Lower leg skin (tissue), 4 donors: ENCODE measurements at regions of chr11 and their contacts with region 1.

Region 1: GRCh38 chr11:110195845-110196754 is 100.3 kb downstream of the RDX start:
- DNase-seq: peak in 1 of 2 donors; percentile 48
- H3K4me3 ChIP-seq: no peak overlapping the region
- CTCF ChIP-seq: no peak
- POLR2A ChIP-seq: no peak

Region 2: DNA sequence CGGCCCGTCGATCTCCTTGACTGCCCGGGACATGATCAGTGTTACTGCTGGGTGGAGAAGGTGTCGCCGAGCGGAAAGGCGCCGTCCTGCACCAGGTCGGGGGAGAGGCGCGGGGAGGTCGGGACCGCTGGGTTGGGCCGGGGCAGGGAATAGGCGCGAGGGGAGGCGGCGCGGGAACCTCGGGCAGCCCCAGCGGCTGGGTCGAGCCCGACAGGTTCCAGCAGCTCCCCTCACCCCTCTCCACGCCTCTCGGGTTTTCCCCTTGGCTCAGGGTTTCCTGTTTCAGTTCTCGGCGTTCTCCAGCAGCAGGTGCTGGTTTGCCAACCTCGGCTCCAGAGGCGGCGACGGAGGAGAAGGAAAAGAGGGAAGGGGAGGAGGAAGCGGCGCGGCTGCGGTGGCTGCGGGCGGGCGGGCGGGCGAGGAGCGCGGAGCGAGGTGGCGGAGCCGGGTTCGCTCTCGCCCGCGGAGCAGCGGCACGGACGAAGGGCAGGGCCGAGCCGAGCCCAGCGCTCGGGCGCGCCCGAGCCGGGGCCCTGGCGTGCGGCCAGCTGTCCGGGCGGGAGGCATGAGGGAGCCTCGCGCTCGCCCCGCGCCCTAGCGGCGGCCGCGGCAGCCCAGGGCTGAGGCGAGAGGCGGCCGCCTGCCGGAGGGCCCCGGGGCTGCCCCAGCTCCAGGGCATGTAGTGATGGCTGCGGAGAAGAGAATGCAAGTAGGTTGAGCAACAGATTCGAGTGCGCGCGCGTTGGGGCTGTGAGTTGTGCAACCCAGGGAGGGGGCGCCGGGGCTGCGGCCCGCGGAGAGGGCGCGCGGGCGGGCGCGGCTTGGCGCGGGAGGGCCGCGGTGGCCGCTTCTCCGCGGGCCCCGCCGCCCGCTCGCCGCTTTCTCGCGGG is 103.3 kb before region 1 on chr11 and contains the start of gene ZC3H12C:
- intact Hi-C with region 1: no loop called
- DNase-seq: peak; percentile 72 to 97
- H3K4me3 ChIP-seq: peak within 1 kb of the TSS; percentile 70
- CTCF ChIP-seq: no peak
- POLR2A ChIP-seq: no peak
- total RNA-seq, gene ZC3H12C: 13.7 to 22.6 (median 14.6) TPM

Region 3: GRCh38 chr11:110317516-110317932 is 121.4 kb after region 1 on chr11:
- intact Hi-C with region 1: no loop called
- DNase-seq: no peak
- H3K4me3 ChIP-seq: no peak overlapping the region
- CTCF ChIP-seq: no peak
- POLR2A ChIP-seq: no peak

Region 4: DNA sequence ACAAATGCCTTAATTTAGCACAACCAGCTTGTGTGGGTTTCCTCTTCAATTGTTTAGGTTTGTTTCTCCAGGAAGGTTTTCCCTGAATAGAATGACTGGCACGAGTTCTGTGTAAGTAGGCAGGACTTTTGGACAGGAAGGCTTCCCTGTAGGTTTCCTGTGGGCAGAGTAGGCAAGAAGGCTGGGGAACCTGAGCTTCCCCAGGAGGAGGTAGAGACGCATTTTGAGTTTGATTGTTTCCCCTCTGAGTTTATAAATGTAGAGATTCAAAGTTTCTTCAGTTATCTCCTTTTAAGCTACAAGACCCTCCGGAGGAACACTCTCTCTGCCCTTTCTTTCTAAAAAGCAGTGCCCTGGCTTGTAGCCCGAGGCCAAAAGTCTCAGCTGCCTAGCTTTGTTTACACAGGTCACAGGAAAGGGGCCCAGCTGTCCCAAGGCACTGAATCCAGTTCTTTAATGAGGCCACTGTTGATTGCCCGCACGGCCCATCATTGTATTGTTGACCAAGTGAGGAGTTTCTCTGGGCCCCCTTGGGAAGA is 166.9 kb after region 1 on chr11:
- intact Hi-C with region 1: loop called (anchors 10 kb)
- DNase-seq: no peak
- H3K4me3 ChIP-seq: no peak overlapping the region
- CTCF ChIP-seq: no peak
- POLR2A ChIP-seq: no peak

Region 5: GRCh38 chr11:110434952-110435779 is 239.1 kb after region 1 on chr11:
- intact Hi-C with region 1: loop called (anchors 5 kb)
- DNase-seq: no peak
- H3K4me3 ChIP-seq: no peak overlapping the region
- CTCF ChIP-seq: no peak
- POLR2A ChIP-seq: no peak

Region 6: GRCh38 chr11:110538154-110538553 is 342.1 kb after region 1 on chr11:
- intact Hi-C with region 1: no loop called
- DNase-seq: no peak
- H3K4me3 ChIP-seq: no peak overlapping the region
- CTCF ChIP-seq: no peak
- POLR2A ChIP-seq: no peak